B cell (primary cell): ENCODE measurements at regions of chr11 and their contacts with region 1.

Region 1: DNA sequence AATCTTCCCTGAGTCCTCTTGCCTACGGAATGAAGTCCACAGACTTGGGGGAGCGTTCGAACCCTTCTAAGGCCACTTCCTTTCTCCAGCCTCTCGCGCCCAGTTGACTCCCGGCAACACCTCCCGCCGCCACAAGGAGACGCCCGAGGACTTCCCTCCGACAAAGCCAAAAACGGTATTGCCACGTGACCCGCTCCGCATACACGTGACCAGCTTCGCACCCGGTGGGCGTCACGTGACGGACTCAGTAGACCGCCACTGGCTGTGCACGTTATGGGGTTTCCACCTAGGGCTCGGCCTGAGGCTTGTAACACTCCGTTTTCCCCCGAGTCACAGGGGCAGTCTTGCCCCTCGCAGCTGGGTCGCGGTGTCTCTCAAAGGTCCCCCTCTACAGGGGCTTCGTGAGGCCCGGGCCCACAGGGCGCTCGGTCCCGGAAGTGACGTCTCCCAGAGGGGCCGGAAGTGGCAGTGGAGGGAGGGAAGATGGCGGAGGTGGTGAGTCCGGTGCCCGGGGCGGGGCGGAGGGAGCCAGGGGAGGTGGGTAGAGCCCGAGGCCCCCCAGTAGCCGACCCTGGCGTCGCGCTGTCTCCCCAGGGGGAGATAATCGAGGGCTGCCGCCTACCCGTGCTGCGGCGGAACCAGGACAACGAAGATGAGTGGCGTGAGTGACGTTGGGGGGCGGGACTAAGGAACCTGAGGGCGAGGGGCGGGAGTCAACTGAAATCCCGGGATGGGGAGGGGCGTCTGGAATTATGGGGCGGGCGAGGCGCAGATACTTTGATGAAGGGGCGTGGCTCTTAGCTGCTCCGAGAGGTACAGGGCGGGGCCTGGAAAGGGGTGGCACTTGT is at the start of gene KAT5:
- DNase-seq: peak; percentile 100
- ATAC-seq: peak; percentile 82
- H3K4me3 ChIP-seq: peak within 1 kb of the TSS; percentile 41 to 94 (median 84)
- H3K4me3 Mint-ChIP-seq: peak within 1 kb of the TSS; percentile 92
- H3K27ac ChIP-seq: peak within 1 kb of the TSS; percentile 98 to 99
- H3K27ac Mint-ChIP-seq: peak within 1 kb of the TSS; percentile 99
- H3K4me1 ChIP-seq: peaks cover 10 to 17% of the 10 kb centered on the region in 2 donors
- H3K4me1 Mint-ChIP-seq: peaks cover 27% of the 10 kb centered on the region
- H3K27me3 ChIP-seq: no peaks in the 10 kb centered on the region
- H3K27me3 Mint-ChIP-seq: no peaks in the 10 kb centered on the region
- CTCF ChIP-seq: peak; percentile 98
- total RNA-seq, gene KAT5: 134 and 142 TPM in 2 replicates

Region 2: GRCh38 chr11:65637794-65638317 is 74.2 kb before region 1 on chr11 and contains the start of gene SIPA1:
- CTCF ChIA-PET with region 1: interaction called, 8 read pairs
- POLR2A ChIA-PET with region 1: interaction called, 18 read pairs
- intact Hi-C with region 1: loop called (anchors 1 kb)
- DNase-seq: peak; percentile 88
- ATAC-seq: peak; percentile 32
- H3K4me3 ChIP-seq: peak within 1 kb of the TSS; percentile 70 to 97 (median 93)
- H3K4me3 Mint-ChIP-seq: peak within 1 kb of the TSS; percentile 99
- H3K27ac ChIP-seq: peak within 1 kb of the TSS; percentile 100
- H3K27ac Mint-ChIP-seq: peak within 1 kb of the TSS; percentile 98
- H3K4me1 ChIP-seq: peaks cover 37 to 66% of the 10 kb centered on the region in 2 donors
- H3K4me1 Mint-ChIP-seq: peaks cover 42% of the 10 kb centered on the region
- H3K27me3 ChIP-seq: no peaks in the 10 kb centered on the region
- H3K27me3 Mint-ChIP-seq: no peaks in the 10 kb centered on the region
- CTCF ChIP-seq: no peak
- total RNA-seq, gene SIPA1: 448 and 461 TPM in 2 replicates

Region 3: GRCh38 chr11:65766535-65766934 is 54.5 kb after region 1 on chr11:
- CTCF ChIA-PET with region 1: interaction called, 3 read pairs
- POLR2A ChIA-PET with region 1: no interaction called
- intact Hi-C with region 1: loop called (anchors 1 kb)
- DNase-seq: no peak
- ATAC-seq: no peak
- H3K4me3 ChIP-seq: no peak overlapping the region
- H3K4me3 Mint-ChIP-seq: no peak overlapping the region
- H3K27ac ChIP-seq: no peak overlapping the region
- H3K27ac Mint-ChIP-seq: no peak overlapping the region
- H3K4me1 ChIP-seq: peaks cover 0 to 4% of the 10 kb centered on the region in 2 donors
- H3K4me1 Mint-ChIP-seq: peaks cover 3% of the 10 kb centered on the region
- H3K27me3 ChIP-seq: no peaks in the 10 kb centered on the region
- H3K27me3 Mint-ChIP-seq: peaks cover under 1% of the 10 kb centered on the region
- CTCF ChIP-seq: no peak

Region 4: GRCh38 chr11:65833297-65834030 is 121.5 kb after region 1 on chr11 and contains the start of gene SNX32:
- CTCF ChIA-PET with region 1: interaction called, 7 read pairs
- POLR2A ChIA-PET with region 1: interaction called, 12 read pairs
- intact Hi-C with region 1: no loop called
- DNase-seq: peak; percentile 96
- ATAC-seq: peak; percentile 99
- H3K4me3 ChIP-seq: peak within 1 kb of the TSS; percentile 47 to 81 (median 67)
- H3K4me3 Mint-ChIP-seq: no peak within 1 kb of the TSS
- H3K27ac ChIP-seq: peak within 1 kb of the TSS; percentile 71 to 86
- H3K27ac Mint-ChIP-seq: peak within 1 kb of the TSS; percentile 50
- H3K4me1 ChIP-seq: peaks cover 13 to 21% of the 10 kb centered on the region in 2 donors
- H3K4me1 Mint-ChIP-seq: peaks cover 8% of the 10 kb centered on the region
- H3K27me3 ChIP-seq: peaks cover 0 to 4% (median 0%) of the 10 kb centered on the region in 4 experiments
- H3K27me3 Mint-ChIP-seq: no peaks in the 10 kb centered on the region
- CTCF ChIP-seq: no peak
- total RNA-seq, gene SNX32: 0.34 and 0.57 TPM in 2 replicates

Region 5: GRCh38 chr11:65988791-65989592 is 277.0 kb after region 1 on chr11:
- CTCF ChIA-PET with region 1: interaction called, 7 read pairs
- POLR2A ChIA-PET with region 1: no interaction called
- intact Hi-C with region 1: loop called (anchors 1 kb)
- DNase-seq: peak; percentile 96
- ATAC-seq: peak; percentile 99
- H3K4me3 ChIP-seq: no peak overlapping the region
- H3K4me3 Mint-ChIP-seq: no peak overlapping the region
- H3K27ac ChIP-seq: no peak overlapping the region
- H3K27ac Mint-ChIP-seq: peak overlapping the region; percentile 84
- H3K4me1 ChIP-seq: peaks cover 3 to 7% of the 10 kb centered on the region in 2 donors
- H3K4me1 Mint-ChIP-seq: peaks cover 5% of the 10 kb centered on the region
- H3K27me3 ChIP-seq: no peaks in the 10 kb centered on the region
- H3K27me3 Mint-ChIP-seq: no peaks in the 10 kb centered on the region
- CTCF ChIP-seq: peak; percentile 99

Region 6: GRCh38 chr11:66491315-66491935 is 779.4 kb after region 1 on chr11:
- CTCF ChIA-PET with region 1: no interaction called
- POLR2A ChIA-PET with region 1: no interaction called
- intact Hi-C with region 1: no loop called
- DNase-seq: no peak
- ATAC-seq: no peak
- H3K4me3 ChIP-seq: no peak overlapping the region
- H3K4me3 Mint-ChIP-seq: no peak overlapping the region
- H3K27ac ChIP-seq: no peak overlapping the region
- H3K27ac Mint-ChIP-seq: no peak overlapping the region
- H3K4me1 ChIP-seq: no peaks in the 10 kb centered on the region
- H3K4me1 Mint-ChIP-seq: no peaks in the 10 kb centered on the region
- H3K27me3 ChIP-seq: no peaks in the 10 kb centered on the region
- H3K27me3 Mint-ChIP-seq: no peaks in the 10 kb centered on the region
- CTCF ChIP-seq: no peak